Mammary epithelial cell (primary cell): ENCODE measurements at regions of chr1 and their contacts with region 1.

Region 1: GRCh38 chr1:19872190-19872589 is 10.0 kb upstream of the OTUD3 start:
- DNase-seq: peak; percentile 83
- H3K4me3 ChIP-seq: no peak overlapping the region
- H3K27ac ChIP-seq: no peak overlapping the region
- H3K4me1 ChIP-seq: no peaks in the 10 kb centered on the region
- H3K27me3 ChIP-seq: no peaks in the 10 kb centered on the region
- CTCF ChIP-seq: peak; percentile 6 to 40

Region 2: DNA sequence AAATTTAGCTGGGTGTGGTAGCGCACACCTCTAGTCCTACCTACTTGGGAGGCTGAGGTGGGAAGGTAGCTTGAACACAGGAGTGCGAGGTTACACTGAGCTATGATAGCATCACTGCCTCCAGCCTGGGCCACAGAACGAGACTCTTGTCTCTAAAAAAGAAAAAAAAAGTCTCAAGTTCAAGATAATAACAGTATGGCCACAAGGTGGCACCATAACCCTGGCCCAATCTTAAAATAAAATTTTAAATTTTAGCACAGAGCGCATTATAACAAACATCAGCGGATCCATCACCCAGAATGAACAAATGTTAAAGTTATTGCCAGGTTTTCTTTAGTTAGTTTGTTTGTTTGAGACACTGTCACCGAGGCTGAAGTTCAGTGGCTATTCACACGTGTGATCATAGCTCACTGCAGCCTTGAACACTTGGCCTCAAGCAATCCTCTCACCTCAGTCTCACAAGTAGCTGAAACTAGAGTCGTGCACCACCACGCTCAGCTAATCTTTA is 210.4 kb before region 1 on chr1:
- CTCF ChIA-PET with region 1: no interaction called
- dilution Hi-C with region 1: no loop called
- in situ Hi-C with region 1: no loop called
- intact Hi-C with region 1: loop called (anchors 5 kb)
- DNase-seq: no peak
- H3K4me3 ChIP-seq: no peak overlapping the region
- H3K27ac ChIP-seq: no peak overlapping the region
- H3K4me1 ChIP-seq: peaks cover 33% of the 10 kb centered on the region
- H3K27me3 ChIP-seq: peaks cover 19% of the 10 kb centered on the region
- CTCF ChIP-seq: peak; percentile 65 to 68

Region 3: GRCh38 chr1:19715334-19716203 is 156.6 kb before region 1 on chr1:
- CTCF ChIA-PET with region 1: no interaction called
- dilution Hi-C with region 1: no loop called
- in situ Hi-C with region 1: no loop called
- intact Hi-C with region 1: loop called (anchors 1 kb)
- DNase-seq: peak; percentile 85
- H3K4me3 ChIP-seq: no peak overlapping the region
- H3K27ac ChIP-seq: no peak overlapping the region
- H3K4me1 ChIP-seq: no peaks in the 10 kb centered on the region
- H3K27me3 ChIP-seq: no peaks in the 10 kb centered on the region
- CTCF ChIP-seq: peak; percentile 84 to 95

Region 4: GRCh38 chr1:19735440-19736127 is 136.6 kb before region 1 on chr1:
- CTCF ChIA-PET with region 1: no interaction called
- dilution Hi-C with region 1: no loop called
- in situ Hi-C with region 1: no loop called
- intact Hi-C with region 1: loop called (anchors 1 kb)
- DNase-seq: peak; percentile 54
- H3K4me3 ChIP-seq: no peak overlapping the region
- H3K27ac ChIP-seq: no peak overlapping the region
- H3K4me1 ChIP-seq: peaks cover 15% of the 10 kb centered on the region
- H3K27me3 ChIP-seq: no peaks in the 10 kb centered on the region
- CTCF ChIP-seq: no peak

Region 5: DNA sequence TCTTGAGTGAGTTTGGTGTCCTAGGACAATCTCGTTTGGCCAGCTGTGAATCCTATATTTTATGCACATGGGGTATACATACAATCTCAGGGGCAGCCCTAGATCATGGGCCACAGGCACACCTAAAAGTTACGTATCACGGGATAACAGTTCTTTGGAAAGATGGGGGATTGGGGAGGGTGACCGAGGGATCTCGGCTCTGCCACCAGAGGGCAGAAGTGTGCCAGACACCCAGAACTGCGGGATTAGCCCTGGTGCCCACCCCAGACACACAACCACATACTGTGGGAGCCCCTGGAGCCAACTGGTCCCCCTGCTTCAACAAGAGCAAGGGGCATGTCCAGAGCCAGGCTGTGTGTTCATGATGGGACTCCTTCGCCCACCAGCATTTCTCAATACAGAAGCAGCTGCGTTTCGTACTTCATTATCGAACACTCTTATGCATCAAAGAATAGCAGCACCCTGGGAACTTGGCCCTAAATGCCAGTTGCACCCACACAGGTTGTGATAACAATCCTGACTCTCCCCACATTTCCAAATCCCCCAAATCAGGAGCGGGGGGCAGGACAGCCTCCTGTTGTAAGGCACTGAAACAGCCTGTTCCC is 109.9 kb before region 1 on chr1:
- CTCF ChIA-PET with region 1: no interaction called
- dilution Hi-C with region 1: no loop called
- in situ Hi-C with region 1: no loop called
- intact Hi-C with region 1: loop called (anchors 1 kb)
- DNase-seq: no peak
- H3K4me3 ChIP-seq: no peak overlapping the region
- H3K27ac ChIP-seq: no peak overlapping the region
- H3K4me1 ChIP-seq: peaks cover 22% of the 10 kb centered on the region
- H3K27me3 ChIP-seq: no peaks in the 10 kb centered on the region
- CTCF ChIP-seq: peak; percentile 72 to 90

Region 6: GRCh38 chr1:19799877-19800804 is 72.0 kb before region 1 on chr1 and contains the start of gene TMCO4:
- CTCF ChIA-PET with region 1: no interaction called
- dilution Hi-C with region 1: no loop called
- in situ Hi-C with region 1: no loop called
- intact Hi-C with region 1: loop called (anchors 2 kb)
- DNase-seq: peak; percentile 50
- H3K4me3 ChIP-seq: peak within 1 kb of the TSS; percentile 54 to 73 (median 62)
- H3K27ac ChIP-seq: no peak within 1 kb of the TSS
- H3K4me1 ChIP-seq: peaks cover 4% of the 10 kb centered on the region
- H3K27me3 ChIP-seq: no peaks in the 10 kb centered on the region
- CTCF ChIP-seq: no peak
- total RNA-seq, gene TMCO4: 5.7 to 16.2 TPM

Region 7: DNA sequence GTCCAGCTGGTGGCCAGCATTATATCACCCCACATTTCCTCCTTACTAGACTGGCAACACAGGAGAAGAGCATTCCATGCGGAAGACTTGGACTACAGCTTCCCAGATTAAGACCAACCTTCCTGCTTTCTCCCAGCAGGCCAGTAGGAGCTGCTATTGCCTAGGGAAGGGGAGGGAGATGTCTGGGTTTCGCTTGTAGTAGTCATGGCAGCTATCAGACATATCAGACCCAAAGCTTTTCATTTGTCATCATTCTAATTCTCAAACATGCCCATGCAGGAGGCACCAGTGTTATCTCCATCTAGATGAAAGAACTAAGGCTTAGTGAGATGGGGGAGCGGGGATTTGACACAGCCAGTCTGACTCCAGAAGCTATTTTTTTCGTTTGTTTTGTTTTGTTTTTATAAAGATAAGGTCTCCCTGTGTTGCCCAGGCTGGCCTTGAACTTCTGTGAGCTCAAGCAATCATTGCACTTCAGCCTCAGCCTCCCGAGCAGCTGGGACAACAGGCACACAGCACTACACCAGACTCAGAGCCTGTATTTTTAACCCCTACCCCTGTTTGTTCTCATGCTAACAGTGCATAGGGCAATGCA is 102.7 kb after region 1 on chr1:
- CTCF ChIA-PET with region 1: no interaction called
- dilution Hi-C with region 1: no loop called
- in situ Hi-C with region 1: no loop called
- intact Hi-C with region 1: no loop called
- DNase-seq: peak; percentile 86
- H3K4me3 ChIP-seq: no peak overlapping the region
- H3K27ac ChIP-seq: no peak overlapping the region
- H3K4me1 ChIP-seq: peaks cover 6% of the 10 kb centered on the region
- H3K27me3 ChIP-seq: no peaks in the 10 kb centered on the region
- CTCF ChIP-seq: peak; percentile 100